ENCODE measurements at regions of chr7 and their contacts with region 1.

Region 1: DNA sequence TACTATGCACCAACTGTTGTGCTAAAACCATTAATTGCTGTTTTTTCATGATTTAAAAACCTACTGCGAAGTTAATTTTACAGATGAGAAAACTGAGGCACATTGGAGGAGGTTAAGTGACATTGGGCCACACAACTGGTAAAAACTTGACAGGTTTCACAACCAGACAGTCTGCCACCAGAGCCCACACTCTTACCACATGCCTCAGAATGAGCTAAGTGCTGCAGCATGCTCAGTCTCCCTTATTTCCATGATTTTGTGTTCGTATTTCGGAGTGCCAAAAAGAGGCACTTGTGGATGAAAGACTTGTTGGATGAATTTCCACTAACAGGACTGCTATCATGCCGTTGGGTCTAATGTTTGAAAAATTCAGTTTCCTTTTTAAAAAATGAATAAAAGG is 77.4 kb downstream of the PCLO start:
- DNase-seq: no peak
- ATAC-seq: no peak
- H3K4me3 ChIP-seq: no peak overlapping the region
- H3K27ac ChIP-seq: no peak overlapping the region
- H3K4me1 ChIP-seq: no peaks in the 10 kb centered on the region
- H3K27me3 ChIP-seq: no peaks in the 10 kb centered on the region
- CTCF ChIP-seq: no peak

Region 2: GRCh38 chr7:83148776-83149175 is 63.5 kb after region 1 on chr7:
- intact Hi-C with region 1: loop called in 1 of 10 experiments (anchors 10 kb)
- DNase-seq: no peak
- ATAC-seq: no peak
- H3K4me3 ChIP-seq: no peak overlapping the region
- H3K27ac ChIP-seq: no peak overlapping the region
- H3K4me1 ChIP-seq: no peaks in the 10 kb centered on the region
- H3K27me3 ChIP-seq: no peaks in the 10 kb centered on the region
- CTCF ChIP-seq: no peak

Region 3: GRCh38 chr7:83210479-83210878 is 125.2 kb after region 1 on chr7:
- intact Hi-C with region 1: no loop called
- DNase-seq: no peak
- ATAC-seq: no peak
- H3K4me3 ChIP-seq: no peak overlapping the region
- H3K27ac ChIP-seq: no peak overlapping the region
- H3K4me1 ChIP-seq: no peaks in the 10 kb centered on the region
- H3K27me3 ChIP-seq: no peaks in the 10 kb centered on the region
- CTCF ChIP-seq: no peak